ENCODE measurements at regions of chr6 and their contacts with region 1.

Region 1: DNA sequence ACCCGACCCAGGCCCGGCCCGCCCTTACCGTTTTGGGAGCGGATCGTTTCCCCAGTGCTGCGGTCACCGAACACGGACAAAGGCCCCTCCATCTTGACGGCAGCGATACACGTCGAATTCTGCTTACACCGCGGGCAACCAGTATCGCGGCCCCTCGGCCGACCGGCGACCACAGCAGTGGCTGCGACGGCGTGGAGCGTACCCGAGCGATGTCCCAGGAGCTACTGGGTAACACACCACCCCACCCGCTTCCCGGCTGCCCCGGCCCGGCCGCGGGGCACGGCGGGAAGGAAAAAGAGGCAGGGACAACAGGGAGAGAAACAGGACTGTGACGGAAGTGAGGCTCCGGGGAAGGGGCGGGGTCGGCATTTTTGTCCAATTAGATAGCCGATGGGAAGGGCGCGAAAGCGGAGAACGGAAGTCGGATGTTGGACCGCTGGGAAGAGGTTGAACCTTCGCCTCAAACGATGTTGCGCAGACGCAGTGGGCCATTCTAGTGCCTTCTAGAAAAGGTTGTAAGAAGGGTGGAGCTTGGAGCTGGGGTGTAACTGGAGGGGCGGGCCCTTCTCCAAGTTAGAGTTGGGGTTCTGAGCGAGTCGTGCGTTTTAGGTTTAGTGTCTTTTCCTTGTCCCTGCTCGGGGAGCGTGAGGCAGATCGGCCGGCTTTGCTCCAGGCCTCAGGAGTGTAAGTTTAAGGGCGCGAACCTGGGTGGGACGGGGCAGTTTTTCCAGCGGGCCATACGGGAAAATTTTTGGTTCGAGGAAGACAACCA is at the start of gene TCP1:
- DNase-seq: peak; percentile 100
- H3K4me3 ChIP-seq: peak within 1 kb of the TSS; percentile 63 to 95 (median 64)
- H3K27ac ChIP-seq: peak within 1 kb of the TSS; percentile 62
- H3K4me1 ChIP-seq: peaks cover 27% of the 10 kb centered on the region
- H3K27me3 ChIP-seq: no peaks in the 10 kb centered on the region
- CTCF ChIP-seq: no peak
- POLR2A ChIP-seq: peak; percentile 88
- total RNA-seq, gene TCP1: 288 and 302 TPM in 2 replicates

Region 2: DNA sequence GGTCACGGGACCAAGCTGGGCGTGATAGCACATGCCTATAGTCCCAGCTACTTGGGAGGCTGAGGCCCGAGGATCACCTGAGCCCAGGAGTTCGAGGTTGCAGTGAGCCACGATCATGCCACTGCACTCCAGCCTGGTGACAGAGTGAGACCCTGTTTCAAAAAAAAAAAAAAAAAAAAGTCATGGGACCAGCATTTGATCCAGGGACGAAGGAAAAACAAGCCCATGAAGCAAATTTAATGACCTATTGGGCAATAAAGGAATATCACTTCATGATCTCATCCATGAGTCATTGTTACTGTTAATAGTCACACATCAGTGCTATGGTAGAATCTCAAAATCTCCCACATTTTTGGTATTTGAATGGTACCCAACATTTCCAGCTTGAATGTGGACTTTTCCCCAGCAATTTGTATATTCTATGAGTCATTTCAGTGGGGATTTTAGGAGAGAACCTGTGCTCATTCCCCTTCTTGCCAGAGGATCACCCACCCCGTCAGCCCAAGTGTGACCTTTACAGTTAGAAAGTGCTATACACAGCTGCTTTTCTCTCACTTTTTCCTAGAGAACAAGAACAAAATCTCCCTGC is 88.1 kb before region 1 on chr6:
- CTCF ChIA-PET with region 1: no interaction called
- POLR2A ChIA-PET with region 1: no interaction called
- dilution Hi-C with region 1: no loop called
- intact Hi-C with region 1: no loop called
- DNase-seq: peak; percentile 42
- H3K4me3 ChIP-seq: no peak overlapping the region
- H3K27ac ChIP-seq: no peak overlapping the region
- H3K4me1 ChIP-seq: peaks cover 7% of the 10 kb centered on the region
- H3K27me3 ChIP-seq: no peaks in the 10 kb centered on the region
- CTCF ChIP-seq: no peak
- POLR2A ChIP-seq: no peak

Region 3: DNA sequence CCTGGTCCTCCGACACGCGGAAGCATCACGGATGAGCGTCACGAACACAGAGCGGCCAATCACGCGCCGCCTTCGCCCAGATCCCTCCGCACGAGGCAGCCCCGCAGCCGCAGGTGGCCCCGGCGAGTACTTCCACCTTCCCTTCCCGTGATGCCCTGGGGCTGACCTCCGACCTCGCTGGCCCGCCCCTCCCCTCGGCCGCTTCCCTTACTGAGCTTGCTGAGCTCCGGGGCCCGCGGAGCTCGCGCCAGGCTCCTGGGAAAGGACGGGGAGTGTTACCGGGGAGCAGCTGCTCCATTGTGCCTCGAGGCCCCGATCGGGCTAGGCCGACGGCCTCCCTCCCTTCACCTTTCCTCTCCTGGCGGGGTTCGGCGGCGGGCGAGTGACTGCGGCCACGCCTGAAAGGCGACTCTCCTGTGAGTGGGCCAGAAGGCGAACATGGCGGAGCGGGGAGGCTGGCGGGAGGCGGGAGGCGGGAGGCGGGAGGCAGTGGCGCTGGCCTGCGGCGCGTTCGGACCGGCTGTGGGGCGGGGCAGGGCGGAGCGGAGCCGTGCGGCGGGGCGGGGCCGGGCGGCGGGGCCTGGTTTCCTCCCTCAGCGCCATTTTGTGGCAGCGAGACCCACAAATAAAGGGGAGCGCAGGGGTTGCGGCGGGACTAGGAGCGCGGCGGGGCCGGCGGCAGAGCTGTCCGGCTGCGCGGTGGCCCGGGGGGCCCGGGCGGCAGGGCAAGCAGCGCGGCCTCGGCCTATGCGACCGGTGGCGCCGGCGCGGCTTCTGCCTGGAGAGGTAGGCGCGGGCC is 62.4 kb before region 1 on chr6 and contains the start of gene WTAP:
- CTCF ChIA-PET with region 1: interaction called, 5 read pairs
- POLR2A ChIA-PET with region 1: interaction called, 21 read pairs
- dilution Hi-C with region 1: no loop called
- intact Hi-C with region 1: loop called (anchors 1 kb)
- DNase-seq: peak; percentile 95
- H3K4me3 ChIP-seq: peak within 1 kb of the TSS; percentile 83 to 100 (median 89)
- H3K27ac ChIP-seq: peak within 1 kb of the TSS; percentile 93
- H3K4me1 ChIP-seq: peaks cover 21% of the 10 kb centered on the region
- H3K27me3 ChIP-seq: no peaks in the 10 kb centered on the region
- CTCF ChIP-seq: no peak
- POLR2A ChIP-seq: peak; percentile 58
- total RNA-seq, gene WTAP: 75.6 and 81.6 TPM in 2 replicates

Region 4: DNA sequence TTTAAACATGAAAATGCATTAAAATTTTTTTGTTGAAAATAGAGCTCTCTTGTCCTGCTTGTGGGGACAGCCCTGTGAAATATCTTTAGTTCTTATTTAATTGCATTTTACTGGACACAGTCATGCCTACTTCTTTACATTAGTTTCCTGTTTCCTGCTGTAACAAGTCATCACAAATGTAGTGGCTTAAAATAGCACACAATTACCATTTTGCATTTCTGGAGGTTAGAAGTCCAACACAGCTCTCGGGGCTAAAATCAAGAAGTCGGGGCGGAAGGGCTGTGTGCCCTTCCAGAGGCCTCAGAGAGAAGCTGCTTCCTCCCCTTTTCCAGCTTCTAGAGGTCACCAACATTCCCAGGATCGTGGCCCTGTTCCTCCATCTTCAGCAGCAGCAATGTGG is 40.0 kb after region 1 on chr6:
- CTCF ChIA-PET with region 1: no interaction called
- POLR2A ChIA-PET with region 1: no interaction called
- dilution Hi-C with region 1: no loop called
- intact Hi-C with region 1: loop called (anchors 1 kb)
- DNase-seq: no peak
- H3K4me3 ChIP-seq: no peak overlapping the region
- H3K27ac ChIP-seq: no peak overlapping the region
- H3K4me1 ChIP-seq: peaks cover 5% of the 10 kb centered on the region
- H3K27me3 ChIP-seq: no peaks in the 10 kb centered on the region
- CTCF ChIP-seq: no peak
- POLR2A ChIP-seq: no peak

Region 5: GRCh38 chr6:159981403-159982245 is 192.1 kb after region 1 on chr6:
- CTCF ChIA-PET with region 1: no interaction called
- POLR2A ChIA-PET with region 1: no interaction called
- dilution Hi-C with region 1: no loop called
- intact Hi-C with region 1: loop called (anchors 5 kb)
- DNase-seq: peak; percentile 97
- H3K4me3 ChIP-seq: no peak overlapping the region
- H3K27ac ChIP-seq: peak overlapping the region; percentile 40
- H3K4me1 ChIP-seq: peaks cover 30% of the 10 kb centered on the region
- H3K27me3 ChIP-seq: peaks cover 14 to 17% of the 10 kb centered on the region in 2 experiments
- CTCF ChIP-seq: no peak
- POLR2A ChIP-seq: no peak

Region 6: GRCh38 chr6:160455541-160456213 is 666.1 kb after region 1 on chr6:
- CTCF ChIA-PET with region 1: interaction called, 4 read pairs
- POLR2A ChIA-PET with region 1: no interaction called
- dilution Hi-C with region 1: no loop called
- intact Hi-C with region 1: loop called (anchors 5 kb)
- DNase-seq: peak; percentile 43
- H3K4me3 ChIP-seq: no peak overlapping the region
- H3K27ac ChIP-seq: no peak overlapping the region
- H3K4me1 ChIP-seq: no peaks in the 10 kb centered on the region
- H3K27me3 ChIP-seq: no peaks in the 10 kb centered on the region
- CTCF ChIP-seq: peak; percentile 77 to 80
- POLR2A ChIP-seq: no peak

Measured in endothelial cell of umbilical vein (primary cell).